ENCODE measurements at regions of chr5 and their contacts with region 1.

Region 1: DNA sequence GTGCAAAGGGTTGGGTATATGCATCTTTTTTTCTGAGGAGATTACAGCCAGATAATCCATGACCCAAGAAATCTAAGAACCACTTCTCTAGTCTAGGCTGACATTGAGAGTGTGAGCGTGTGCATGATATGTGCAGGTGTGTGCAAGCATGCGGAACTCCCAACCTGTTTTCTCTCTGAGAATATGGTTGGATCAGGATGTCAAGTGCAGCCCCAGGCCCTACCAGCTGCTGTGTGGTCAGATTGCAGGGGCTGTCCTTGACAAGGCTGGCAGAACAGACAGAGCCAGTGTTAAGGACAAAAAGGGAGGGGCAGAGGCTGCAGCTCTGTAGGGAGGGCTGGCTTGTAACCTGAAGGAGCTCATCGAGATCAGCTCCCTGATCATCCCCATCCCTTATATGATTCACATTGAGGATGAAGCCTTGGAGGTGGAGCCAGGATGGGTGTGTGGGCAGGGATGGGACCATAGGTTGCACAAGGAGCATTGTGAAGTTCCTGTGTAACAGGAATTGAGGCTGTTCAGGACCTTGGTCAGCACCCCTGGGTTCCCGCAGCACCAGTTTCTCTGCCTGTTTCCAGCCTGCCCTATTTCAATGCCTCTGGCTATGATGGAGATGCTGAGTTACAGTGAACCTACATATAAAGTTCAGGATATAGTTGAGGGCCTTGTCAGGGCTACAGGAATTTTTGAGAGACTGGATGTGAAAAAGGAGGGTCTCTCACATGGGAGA is 52.6 kb upstream of the ARAP3 start:
- DNase-seq: peak; percentile 83

Region 2: DNA sequence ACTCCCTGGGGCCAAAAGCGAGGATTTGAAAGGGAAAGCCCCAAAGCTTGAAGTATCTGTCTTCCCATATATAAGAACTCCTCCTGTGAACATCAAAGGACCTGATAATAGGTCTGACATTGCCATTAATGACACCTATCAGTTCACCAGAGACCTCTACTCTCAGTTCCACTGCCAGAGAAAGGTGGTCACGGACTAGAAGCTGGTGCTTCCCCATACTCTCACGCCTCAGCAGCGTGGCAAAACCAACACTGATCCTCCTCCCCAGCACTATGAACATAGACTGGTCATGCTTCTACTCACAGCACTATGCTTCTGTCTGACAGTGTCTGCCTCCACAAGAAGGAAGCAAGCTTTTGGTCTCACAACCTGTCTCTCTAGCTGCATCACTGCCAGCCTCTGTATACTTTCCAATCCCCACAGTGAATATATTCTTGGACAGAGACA is 1729.5 kb before region 1 on chr5:
- intact Hi-C with region 1: loop called in 1 of 2 experiments (anchors 5 kb)
- DNase-seq: no peak

Region 3: DNA sequence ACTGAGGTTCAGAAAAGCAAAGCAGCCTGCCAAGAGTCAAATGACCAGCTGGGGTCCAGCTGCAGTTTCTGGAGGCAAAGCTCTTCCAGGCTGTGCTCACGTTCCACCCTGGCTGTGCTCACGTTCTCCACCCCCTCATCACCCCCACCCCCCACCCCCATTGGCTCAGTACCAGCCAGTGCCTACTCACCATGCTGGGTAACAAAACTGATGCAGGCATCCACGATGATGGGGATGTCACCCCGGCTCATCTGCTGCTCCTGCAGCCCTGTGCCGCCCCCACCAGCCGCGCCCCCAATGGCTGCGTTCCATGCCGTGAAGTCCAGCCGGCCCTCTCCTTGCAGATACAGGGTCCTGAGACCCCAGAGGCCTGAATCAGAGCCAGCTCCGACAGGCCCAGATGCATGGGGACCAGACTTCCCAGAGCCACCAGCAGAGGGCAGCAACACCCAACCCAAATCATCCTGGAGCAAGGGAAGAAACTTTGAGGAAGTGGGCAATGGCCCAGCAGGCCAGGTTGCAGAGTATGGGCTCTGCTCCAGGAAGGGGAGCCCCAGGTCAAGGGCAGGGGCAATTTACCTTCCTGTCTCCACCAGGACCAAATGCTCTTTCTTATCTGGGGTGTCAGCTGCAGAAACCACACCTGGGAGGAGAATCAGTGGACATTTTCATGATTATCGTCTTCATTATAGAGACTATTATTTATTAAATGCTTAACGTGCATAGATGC is 69.8 kb before region 1 on chr5:
- intact Hi-C with region 1: no loop called
- DNase-seq: peak; percentile 94

Region 4: DNA sequence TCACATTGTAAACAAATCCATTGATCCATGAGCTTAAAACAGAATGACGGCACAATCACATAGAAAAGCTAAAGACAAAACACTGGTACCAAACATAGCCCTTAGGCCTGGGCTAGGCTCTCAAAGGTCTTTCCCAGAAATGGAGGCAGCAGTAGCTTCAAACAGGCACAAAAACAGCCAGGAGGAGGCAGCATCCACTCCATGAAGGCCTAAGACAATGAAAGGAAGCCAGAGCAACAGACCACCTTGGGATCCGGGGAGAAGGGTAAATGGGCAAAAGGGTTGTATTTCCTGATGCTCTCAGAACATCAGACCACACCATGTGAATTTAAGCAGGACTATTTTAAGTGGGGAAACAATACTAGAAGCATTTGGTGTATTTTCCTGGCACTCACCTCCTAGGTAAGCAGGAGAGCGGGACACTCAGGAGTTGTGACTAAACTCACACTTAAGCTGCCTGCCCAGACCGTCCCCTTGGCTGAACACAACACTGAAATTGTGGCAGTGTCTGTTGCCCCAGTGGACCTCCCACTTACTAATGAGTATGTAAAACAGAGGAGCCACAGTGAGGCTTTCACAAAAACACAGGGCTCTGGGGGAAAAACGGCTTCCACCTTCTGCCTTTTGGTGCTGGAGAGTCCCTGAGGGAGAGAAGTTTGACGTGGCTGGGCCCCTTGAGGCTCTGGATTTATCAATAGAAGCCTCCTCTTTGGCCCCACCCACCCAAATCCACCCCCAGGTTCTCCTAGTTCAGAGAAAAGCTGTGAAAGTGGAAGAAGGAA is 266.2 kb after region 1 on chr5:
- intact Hi-C with region 1: no loop called
- DNase-seq: no peak